ENCODE measurements at regions of chr12 and their contacts with region 1.

Region 1: DNA sequence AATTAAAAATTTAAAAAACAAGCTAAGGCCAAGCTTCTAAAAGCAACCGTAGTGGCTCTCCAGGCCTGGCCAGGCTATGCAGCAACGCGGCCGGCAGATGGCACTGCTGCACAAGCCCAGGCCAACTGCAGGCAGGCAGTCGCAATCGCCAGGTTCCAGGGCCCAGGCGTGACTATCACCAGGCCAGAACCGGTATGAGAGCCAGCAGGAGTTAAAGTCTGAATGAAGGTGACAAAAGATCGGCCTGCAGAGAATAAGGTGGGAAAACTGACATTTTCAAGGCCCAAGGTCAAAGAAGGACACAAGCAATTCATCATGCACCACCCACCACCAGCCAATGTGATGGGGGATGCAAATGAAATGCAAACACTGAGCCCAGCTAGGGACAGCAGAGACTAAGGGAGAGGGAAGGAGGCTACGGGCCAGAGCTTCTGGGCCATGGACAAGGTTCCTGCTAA is 43.6 kb upstream of the ANO2 start:
- DNase-seq: peak; percentile 60 to 82 (median 73)
- H3K4me3 ChIP-seq: no peak overlapping the region
- H3K27ac ChIP-seq: no peak overlapping the region
- H3K4me1 ChIP-seq: no peaks in the 10 kb centered on the region
- H3K27me3 ChIP-seq: no peaks in the 10 kb centered on the region
- CTCF ChIP-seq: peak; percentile 81 to 87 (median 82)
- EP300 ChIP-seq: no peak
- POLR2A ChIP-seq: no peak

Region 2: DNA sequence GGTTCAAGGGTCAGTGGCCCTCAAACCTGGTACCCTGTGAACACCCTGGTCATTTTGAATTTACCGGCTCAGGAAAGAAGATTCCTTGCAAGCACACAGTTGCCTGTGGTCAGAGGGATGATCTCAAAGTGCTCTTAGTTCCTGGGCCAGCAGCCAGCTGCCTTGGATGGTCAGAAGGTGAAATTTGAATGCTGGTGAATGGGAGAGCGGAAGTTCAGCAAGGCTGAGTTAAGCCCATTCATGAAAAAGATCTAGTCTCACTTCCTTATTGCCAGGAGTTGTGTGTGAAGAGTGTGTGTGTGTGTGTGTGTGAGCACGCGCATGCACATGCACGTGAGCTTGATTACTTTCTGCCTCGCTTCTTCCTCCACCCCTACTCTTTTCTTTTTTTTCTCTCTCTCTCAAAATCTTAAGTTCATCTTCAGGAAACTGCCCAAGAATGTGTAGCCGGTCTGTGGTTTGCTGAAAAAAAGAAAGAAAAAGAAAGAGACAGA is 1870.6 kb before region 1 on chr12:
- intact Hi-C with region 1: no loop called
- DNase-seq: peak in 1 of 5 donors; percentile 37
- H3K4me3 ChIP-seq: no peak overlapping the region
- H3K27ac ChIP-seq: no peak overlapping the region
- H3K4me1 ChIP-seq: no peaks in the 10 kb centered on the region
- H3K27me3 ChIP-seq: no peaks in the 10 kb centered on the region
- CTCF ChIP-seq: no peak
- EP300 ChIP-seq: no peak
- POLR2A ChIP-seq: no peak

Region 3: DNA sequence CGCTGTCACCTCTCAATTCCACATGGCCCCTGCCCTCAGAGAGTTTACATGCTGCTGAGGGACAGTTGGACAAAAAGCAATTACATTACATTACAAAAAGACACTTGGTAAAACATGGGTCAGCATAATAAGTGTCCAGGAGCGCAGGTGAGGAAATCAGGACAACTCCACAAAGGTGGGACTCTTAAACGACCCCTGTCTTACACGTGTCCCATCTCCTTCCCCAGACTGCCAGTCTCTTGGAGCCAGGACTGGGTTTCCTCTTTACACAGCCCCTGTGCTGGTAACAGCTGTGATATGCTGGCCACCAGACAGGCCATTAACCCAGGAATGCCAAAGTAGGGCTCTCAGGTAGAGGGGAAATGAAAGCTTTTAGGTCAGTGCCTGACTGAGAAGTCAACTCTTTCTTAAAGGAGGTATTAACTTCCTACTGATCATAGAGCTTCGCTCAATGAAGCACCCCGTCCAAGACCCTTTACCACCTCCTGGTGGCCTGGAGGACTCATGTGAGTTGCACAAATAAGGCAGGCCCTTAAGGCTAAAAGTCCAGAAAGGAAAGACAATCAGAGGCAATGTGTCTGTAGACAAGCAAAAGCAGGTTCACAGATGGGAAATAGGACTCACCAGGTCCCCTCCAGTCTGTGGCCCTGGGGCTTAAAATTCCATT is 99.2 kb before region 1 on chr12:
- intact Hi-C with region 1: no loop called
- DNase-seq: no peak
- H3K4me3 ChIP-seq: no peak overlapping the region
- H3K27ac ChIP-seq: no peak overlapping the region
- H3K4me1 ChIP-seq: no peaks in the 10 kb centered on the region
- H3K27me3 ChIP-seq: no peaks in the 10 kb centered on the region
- CTCF ChIP-seq: no peak
- EP300 ChIP-seq: no peak
- POLR2A ChIP-seq: no peak

Region 4: GRCh38 chr12:6039894-6040568 is 51.3 kb after region 1 on chr12:
- intact Hi-C with region 1: loop called in 3 of 4 experiments (anchors 5 kb)
- DNase-seq: peak; percentile 42 to 61 (median 54)
- H3K4me3 ChIP-seq: no peak overlapping the region
- H3K27ac ChIP-seq: no peak overlapping the region
- H3K4me1 ChIP-seq: no peaks in the 10 kb centered on the region
- H3K27me3 ChIP-seq: no peaks in the 10 kb centered on the region
- CTCF ChIP-seq: peak; percentile 74 to 88 (median 87)
- EP300 ChIP-seq: no peak
- POLR2A ChIP-seq: no peak